Heart right ventricle (tissue), 16 donors: ENCODE measurements at regions of chr17 and their contacts with region 1.

Region 1: GRCh38 chr17:59155439-59156182 is at the start of gene PRR11:
- DNase-seq: peak; percentile 85 to 95
- ATAC-seq: peak; percentile 92 to 98 (median 95)
- H3K4me3 ChIP-seq: peak within 1 kb of the TSS; percentile 44 to 93 (median 80)
- H3K27ac ChIP-seq: peak within 1 kb of the TSS; percentile 46 to 92 (median 88)
- H3K4me1 ChIP-seq: peaks cover 0 to 56% (median 28%) of the 10 kb centered on the region in 9 donors
- H3K27me3 ChIP-seq: no peaks in the 10 kb centered on the region
- CTCF ChIP-seq: no peak
- total RNA-seq, gene PRR11: 0.61 to 6.9 (median 1.4) TPM

Region 2: DNA sequence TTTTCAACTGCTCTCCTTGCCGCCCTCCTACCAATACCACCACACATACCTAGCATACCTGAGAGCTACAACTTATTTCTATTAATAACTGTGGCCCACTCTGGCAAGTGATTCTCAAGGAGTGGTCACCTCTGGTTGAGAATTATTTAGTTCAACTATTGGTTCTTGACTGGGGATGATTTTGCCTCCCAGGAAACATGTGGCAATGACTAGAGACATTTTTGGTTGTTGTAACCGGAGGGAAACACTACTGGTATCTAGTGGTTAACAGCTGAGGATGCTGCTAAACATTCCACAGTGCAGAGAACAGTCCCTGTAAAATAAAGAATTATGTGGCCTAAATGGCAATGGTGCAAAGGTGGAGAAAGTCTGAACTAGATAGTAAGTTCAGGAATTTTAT is 145.6 kb before region 1 on chr17:
- intact Hi-C with region 1: no loop called
- DNase-seq: no peak
- ATAC-seq: no peak
- H3K4me3 ChIP-seq: no peak overlapping the region
- H3K27ac ChIP-seq: no peak overlapping the region
- H3K4me1 ChIP-seq: peaks cover 0 to 13% (median 5%) of the 10 kb centered on the region in 9 donors
- H3K27me3 ChIP-seq: no peaks in the 10 kb centered on the region
- CTCF ChIP-seq: no peak

Region 3: GRCh38 chr17:59106463-59107305 is 48.9 kb before region 1 on chr17 and contains the start of gene TRIM37:
- intact Hi-C with region 1: loop called in 4 of 10 experiments (anchors 2 to 10 kb)
- DNase-seq: peak; percentile 97 to 98
- ATAC-seq: peak; percentile 99 to 100 (median 99)
- H3K4me3 ChIP-seq: peak within 1 kb of the TSS; percentile 64 to 97 (median 84)
- H3K27ac ChIP-seq: peak within 1 kb of the TSS; percentile 75 to 95 (median 90)
- H3K4me1 ChIP-seq: peaks cover 0 to 35% (median 23%) of the 10 kb centered on the region in 9 donors
- H3K27me3 ChIP-seq: no peaks in the 10 kb centered on the region
- CTCF ChIP-seq: peak in 2 of 9 donors; percentile 6 to 10
- total RNA-seq, gene TRIM37: 15.2 to 22.2 (median 18.1) TPM

Region 4: GRCh38 chr17:59190806-59191205 is 35.2 kb after region 1 on chr17:
- intact Hi-C with region 1: no loop called
- DNase-seq: no peak
- ATAC-seq: no peak
- H3K4me3 ChIP-seq: no peak overlapping the region
- H3K27ac ChIP-seq: no peak overlapping the region
- H3K4me1 ChIP-seq: no peaks in the 10 kb centered on the region
- H3K27me3 ChIP-seq: no peaks in the 10 kb centered on the region
- CTCF ChIP-seq: no peak

Region 5: DNA sequence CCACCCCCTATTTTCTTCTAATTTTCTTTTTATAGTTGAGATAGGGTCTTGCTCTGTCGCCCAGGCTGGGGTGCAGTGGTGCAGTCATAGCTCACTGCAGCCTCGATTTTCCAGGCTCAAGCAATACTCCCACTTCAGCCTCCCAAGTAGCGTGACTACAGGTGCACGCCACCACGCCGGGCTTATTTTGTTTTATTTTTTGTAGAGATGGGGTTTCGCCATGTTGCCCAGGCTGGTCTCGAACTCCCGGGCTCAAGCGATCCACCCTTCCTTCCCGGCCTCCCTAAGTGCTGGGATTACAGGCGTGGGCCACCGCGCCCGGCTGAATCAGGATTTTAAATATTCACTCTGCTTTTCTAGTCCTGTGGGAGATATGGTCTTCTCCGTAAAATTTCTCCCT is 63.8 kb after region 1 on chr17:
- intact Hi-C with region 1: loop called in 1 of 10 experiments (anchors 5 kb)
- DNase-seq: no peak
- ATAC-seq: no peak
- H3K4me3 ChIP-seq: no peak overlapping the region
- H3K27ac ChIP-seq: no peak overlapping the region
- H3K4me1 ChIP-seq: peaks cover 0 to 16% (median 10%) of the 10 kb centered on the region in 9 donors
- H3K27me3 ChIP-seq: no peaks in the 10 kb centered on the region
- CTCF ChIP-seq: no peak